HepG2 (cell line): ENCODE measurements at regions of chr11 and their contacts with region 1.

Region 1: DNA sequence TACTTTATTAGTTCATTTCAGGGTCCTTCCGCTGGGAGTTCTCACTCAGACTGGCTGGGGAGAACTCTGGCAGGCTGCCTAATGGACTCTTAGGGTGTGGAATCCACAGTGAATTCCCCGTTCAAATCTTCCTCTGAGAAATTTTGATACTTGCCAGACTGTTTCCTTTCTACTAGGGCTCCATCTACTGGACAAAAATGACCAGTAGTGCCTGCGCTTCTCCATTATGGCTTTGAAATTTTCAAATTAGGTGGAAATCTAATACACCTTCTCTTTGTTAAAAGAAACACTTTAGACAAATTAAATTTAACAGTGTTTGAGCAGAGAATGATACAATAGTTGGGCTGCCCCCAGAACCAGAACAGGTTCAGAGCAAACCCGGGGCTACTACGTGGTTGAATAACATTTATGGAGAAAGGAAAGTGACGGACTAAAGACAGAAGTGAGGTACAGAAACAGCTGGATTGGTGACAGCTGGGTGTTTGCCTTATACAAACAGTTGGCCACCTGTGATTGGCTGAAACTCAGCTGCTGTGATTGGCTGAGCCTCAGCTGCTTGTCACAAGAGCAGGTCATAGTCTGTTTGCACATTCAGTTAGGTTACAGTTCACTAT is 52.9 kb upstream of the FDX1 start:
- DNase-seq: peak; percentile 91
- ATAC-seq: peak; percentile 99
- H3K4me3 ChIP-seq: peak overlapping the region; percentile 6 to 54 (median 23); a peak in 3 of 6 replicates
- H3K27ac ChIP-seq: peak overlapping the region; percentile 27
- H3K4me1 ChIP-seq: peaks cover 13% of the 10 kb centered on the region
- H3K27me3 ChIP-seq: no peaks in the 10 kb centered on the region; a peak in 1 of 5 replicates
- CTCF ChIP-seq: peak; percentile 72
- EP300 ChIP-seq: no peak
- POLR2A ChIP-seq: no peak
- RAD21 ChIP-seq: peak; percentile 68

Region 2: DNA sequence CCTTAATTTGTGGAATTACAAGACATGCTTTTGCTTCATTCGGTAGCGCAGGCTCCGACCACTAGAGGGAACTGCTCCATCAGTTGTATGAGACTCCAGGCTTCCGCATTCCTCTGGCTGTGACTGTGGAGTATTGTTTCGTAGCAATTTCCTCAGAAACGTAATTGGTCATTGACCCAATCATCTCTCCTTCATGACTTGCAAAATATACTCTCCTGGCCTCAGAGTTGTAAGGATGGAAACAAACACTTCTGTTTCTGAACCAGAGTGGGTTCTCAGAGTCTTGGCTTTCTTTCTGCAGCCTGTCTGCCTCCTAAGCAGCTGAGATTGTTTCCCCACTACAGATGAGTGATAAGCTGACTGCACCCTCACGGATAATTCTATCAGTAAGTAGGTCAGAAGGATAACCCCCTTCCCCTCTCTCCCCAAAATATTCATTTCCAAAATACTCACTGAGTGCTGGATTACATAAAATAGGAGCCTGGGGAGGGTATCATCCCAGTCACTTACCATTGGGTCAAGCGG is 430.4 kb before region 1 on chr11:
- CTCF ChIA-PET with region 1: no interaction called
- POLR2A ChIA-PET with region 1: no interaction called
- in situ Hi-C with region 1: no loop called
- intact Hi-C with region 1: loop called (anchors 2 kb)
- DNase-seq: peak; percentile 78
- ATAC-seq: peak; percentile 100
- H3K4me3 ChIP-seq: peak overlapping the region; percentile 35 to 47 (median 44); a peak in 4 of 6 replicates
- H3K27ac ChIP-seq: no peak overlapping the region
- H3K4me1 ChIP-seq: 0 out of 2 replicates have a peak, but pooled peaks cover 12% of the 10 kb centered on the region
- H3K27me3 ChIP-seq: no peaks in the 10 kb centered on the region; a peak in 2 of 5 replicates
- CTCF ChIP-seq: peak; percentile 83
- EP300 ChIP-seq: 0 out of 4 replicates have a peak, but pooled peaks of 1 of the 2 experiments have one; percentile 7
- POLR2A ChIP-seq: no peak
- RAD21 ChIP-seq: peak; percentile 51; the same call in 1 of the 2 replicates

Region 3: DNA sequence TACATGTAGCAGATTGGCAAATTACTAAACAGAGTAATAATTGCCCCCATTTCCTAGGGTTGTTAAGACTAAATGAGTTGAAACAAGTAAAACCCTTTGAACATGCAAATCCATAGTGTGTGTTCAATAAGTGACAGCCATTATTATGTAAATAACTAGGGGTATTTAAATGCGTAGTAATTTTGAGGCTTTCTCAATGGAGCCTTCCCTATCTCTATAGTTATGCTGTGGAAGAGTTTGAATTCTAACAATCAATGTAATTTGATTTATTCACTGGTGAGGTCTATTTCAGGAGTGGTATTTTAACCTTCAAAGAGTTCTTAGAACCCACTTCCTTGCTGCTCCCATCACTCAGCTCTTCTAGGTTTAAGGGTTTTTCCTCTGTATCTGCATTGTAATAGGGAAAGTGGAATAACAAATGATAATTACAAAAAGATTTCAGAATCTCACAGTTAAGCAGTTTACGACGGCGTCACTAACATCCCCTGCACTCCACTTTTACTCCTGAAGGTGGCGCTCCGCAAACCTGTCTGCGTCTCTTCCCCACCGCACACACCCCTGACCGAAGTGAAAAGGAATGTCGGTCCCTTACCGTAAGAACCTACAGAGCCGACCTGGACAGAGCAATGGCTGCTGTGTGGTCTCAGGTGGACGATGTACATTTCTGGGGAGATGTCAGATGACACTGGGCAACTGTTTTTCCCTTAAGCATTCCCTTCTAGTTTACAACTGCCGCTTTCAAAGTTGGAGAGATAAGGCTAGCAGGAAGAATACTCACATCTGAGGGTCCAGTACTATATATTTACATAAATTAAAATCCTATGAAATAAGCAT is 202.8 kb before region 1 on chr11:
- CTCF ChIA-PET with region 1: interaction called, 3 read pairs
- POLR2A ChIA-PET with region 1: no interaction called
- in situ Hi-C with region 1: no loop called
- intact Hi-C with region 1: loop called (anchors 1 kb)
- DNase-seq: peak; percentile 67
- ATAC-seq: peak; percentile 91
- H3K4me3 ChIP-seq: peak overlapping the region in 2 of 3 experiments; percentile 17 to 25; a peak in 1 of 6 replicates
- H3K27ac ChIP-seq: no peak overlapping the region
- H3K4me1 ChIP-seq: peaks cover 13% of the 10 kb centered on the region; the same call in 1 of the 2 replicates
- H3K27me3 ChIP-seq: peaks cover 0 to 5% of the 10 kb centered on the region in 2 experiments; a peak in 1 of 5 replicates
- CTCF ChIP-seq: peak; percentile 83
- EP300 ChIP-seq: no peak
- POLR2A ChIP-seq: no peak
- RAD21 ChIP-seq: no peak

Region 4: DNA sequence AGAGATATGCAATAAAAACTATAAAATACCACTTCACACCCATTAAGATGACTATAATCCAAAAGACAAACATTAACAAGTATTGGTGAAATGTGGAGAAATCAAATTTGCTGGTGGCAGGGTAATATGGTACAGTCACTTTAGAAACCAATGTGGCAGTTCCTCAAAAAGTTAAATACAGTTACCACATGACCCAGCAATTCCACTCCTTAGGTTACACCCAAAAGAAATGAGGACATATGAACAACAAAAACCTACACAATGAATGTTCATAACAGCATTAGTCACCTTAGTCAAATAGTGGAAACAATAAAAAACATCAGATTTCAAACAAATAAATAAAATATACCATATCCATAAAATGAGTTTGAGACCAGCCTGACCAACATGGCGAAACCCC is 133.0 kb before region 1 on chr11:
- CTCF ChIA-PET with region 1: no interaction called
- POLR2A ChIA-PET with region 1: no interaction called
- in situ Hi-C with region 1: no loop called
- intact Hi-C with region 1: loop called (anchors 2 kb)
- DNase-seq: no peak
- ATAC-seq: no peak
- H3K4me3 ChIP-seq: no peak overlapping the region
- H3K27ac ChIP-seq: no peak overlapping the region
- H3K4me1 ChIP-seq: no peaks in the 10 kb centered on the region
- H3K27me3 ChIP-seq: no peaks in the 10 kb centered on the region
- CTCF ChIP-seq: no peak
- EP300 ChIP-seq: no peak
- POLR2A ChIP-seq: no peak
- RAD21 ChIP-seq: no peak

Region 5: DNA sequence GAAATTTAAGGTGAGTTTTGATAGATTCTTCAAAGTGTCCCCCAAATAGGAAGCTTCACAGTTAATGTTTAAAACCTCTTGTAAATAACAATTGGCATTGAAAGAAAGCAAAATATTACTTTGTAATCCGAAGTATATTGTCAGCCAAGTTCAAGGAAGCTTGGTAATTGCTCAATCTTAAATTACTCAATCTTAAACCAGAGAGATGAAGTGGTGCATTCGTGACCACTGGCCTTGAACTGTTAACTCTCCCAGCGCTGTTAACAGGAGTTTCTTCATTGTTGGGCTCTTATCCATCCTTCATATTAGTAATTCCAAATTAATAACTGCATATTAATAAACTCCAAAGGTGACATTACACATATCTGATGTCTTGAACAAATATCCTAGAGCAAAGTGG is 32.4 kb after region 1 on chr11:
- CTCF ChIA-PET with region 1: no interaction called
- POLR2A ChIA-PET with region 1: no interaction called
- in situ Hi-C with region 1: no loop called
- intact Hi-C with region 1: no loop called
- DNase-seq: no peak
- ATAC-seq: no peak
- H3K4me3 ChIP-seq: no peak overlapping the region
- H3K27ac ChIP-seq: no peak overlapping the region
- H3K4me1 ChIP-seq: no peaks in the 10 kb centered on the region
- H3K27me3 ChIP-seq: no peaks in the 10 kb centered on the region; a peak in 2 of 5 replicates
- CTCF ChIP-seq: no peak
- EP300 ChIP-seq: no peak
- POLR2A ChIP-seq: no peak
- RAD21 ChIP-seq: no peak

Region 6: DNA sequence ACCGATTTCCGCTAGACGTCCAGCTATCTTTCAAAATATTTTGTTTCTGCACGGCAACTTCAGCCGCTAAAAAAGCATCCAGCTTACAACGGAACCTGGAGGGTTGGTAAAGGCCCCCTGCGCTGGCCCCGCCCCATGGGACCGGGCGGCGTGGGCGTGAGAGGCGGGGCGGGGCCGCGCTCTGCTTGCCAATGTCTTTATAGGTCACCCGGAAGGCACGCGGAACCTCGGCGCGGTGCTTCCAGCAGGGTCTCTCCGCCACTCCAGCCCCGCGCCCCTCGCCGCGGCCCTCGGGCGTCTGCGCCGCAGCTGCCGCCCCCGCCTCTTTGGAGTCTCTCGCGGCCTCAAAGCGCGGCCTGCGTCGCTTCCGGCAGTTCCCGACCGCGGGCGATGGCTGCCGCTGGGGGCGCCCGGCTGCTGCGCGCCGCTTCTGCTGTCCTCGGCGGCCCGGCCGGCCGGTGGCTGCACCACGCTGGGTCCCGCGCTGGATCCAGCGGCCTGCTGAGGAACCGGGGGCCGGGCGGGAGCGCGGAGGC is 53.0 kb after region 1 on chr11 and contains the start of gene FDX1:
- CTCF ChIA-PET with region 1: interaction called, 5 read pairs
- POLR2A ChIA-PET with region 1: interaction called, 4 read pairs
- in situ Hi-C with region 1: no loop called
- intact Hi-C with region 1: loop called (anchors 1 kb)
- DNase-seq: peak; percentile 71
- ATAC-seq: peak; percentile 93
- H3K4me3 ChIP-seq: peak within 1 kb of the TSS; percentile 61 to 96 (median 91)
- H3K27ac ChIP-seq: peak within 1 kb of the TSS; percentile 80
- H3K4me1 ChIP-seq: peaks cover 26% of the 10 kb centered on the region
- H3K27me3 ChIP-seq: no peaks in the 10 kb centered on the region; a peak in 1 of 5 replicates
- CTCF ChIP-seq: peak; percentile 61; the same call in 1 of the 2 replicates
- EP300 ChIP-seq: no peak
- POLR2A ChIP-seq: peak; percentile 30 to 58; a peak in 3 of 4 replicates
- RAD21 ChIP-seq: peak; percentile 61; the same call in 1 of the 2 replicates
- total RNA-seq, gene FDX1: 13.1 and 14.5 TPM in 2 replicates